ENCODE measurements at regions of chr6 and their contacts with region 1.

Region 1: DNA sequence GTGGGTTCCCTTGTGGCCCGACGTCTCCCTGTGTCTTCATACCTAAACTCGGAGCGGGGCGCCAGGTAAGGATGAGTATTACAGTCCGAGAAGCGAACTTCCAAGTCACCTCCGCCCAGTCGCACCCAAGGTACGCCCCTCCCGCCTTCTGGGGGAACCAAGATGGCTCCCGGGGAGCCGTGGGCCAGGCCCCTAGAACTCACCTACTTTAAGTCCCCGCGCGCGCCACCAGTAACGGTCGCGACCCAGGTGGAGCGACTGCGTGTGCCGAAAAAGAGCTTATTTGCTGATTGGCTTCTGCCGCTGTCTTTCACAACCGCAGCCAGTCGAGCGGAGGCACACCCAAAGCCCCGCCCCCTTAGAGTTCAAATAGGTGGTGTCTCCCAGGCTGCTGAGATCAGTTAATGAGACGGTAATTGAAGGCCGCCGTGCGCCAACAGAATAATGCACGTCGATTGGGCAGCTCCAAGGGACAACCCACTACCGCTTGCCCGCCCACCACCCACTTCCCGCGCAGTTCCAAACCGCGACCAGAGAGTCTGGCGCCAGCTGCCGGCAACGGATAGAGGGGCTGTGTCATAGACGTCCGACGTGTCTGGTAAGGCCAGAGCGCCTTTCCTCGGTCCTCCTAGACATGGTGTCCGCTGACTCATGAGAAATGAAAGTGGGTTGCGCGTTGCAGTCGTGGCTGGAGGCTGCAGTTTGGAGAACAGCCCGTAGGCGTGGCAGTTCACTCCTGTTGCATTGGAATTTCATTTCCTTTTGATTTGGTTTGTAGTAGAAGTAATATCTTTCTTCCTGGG is at the start of gene MDC1:
- DNase-seq: peak; percentile 100
- ATAC-seq: peak; percentile 83 to 91 (median 87)
- H3K4me3 ChIP-seq: peak within 1 kb of the TSS; percentile 45 to 93 (median 73)
- H3K27ac ChIP-seq: peak within 1 kb of the TSS; percentile 80 to 97 (median 91)
- H3K4me1 ChIP-seq: peaks cover 0 to 40% (median 29%) of the 10 kb centered on the region in 12 donors
- H3K27me3 ChIP-seq: no peaks in the 10 kb centered on the region
- CTCF ChIP-seq: peak in 10 of 12 donors; percentile 4 to 50 (median 36)
- POLR2A ChIP-seq: peak; percentile 25 to 87
- total RNA-seq, gene MDC1: 10.6 to 25.0 (median 17.5) TPM

Region 2: GRCh38 chr6:30489081-30490025 is 227.9 kb before region 1 on chr6 and contains the start of gene HLA-E:
- intact Hi-C with region 1: loop called in 1 of 10 experiments (anchors 10 kb)
- DNase-seq: peak; percentile 91 to 95 (median 93)
- ATAC-seq: peak; percentile 93 to 98 (median 96)
- H3K4me3 ChIP-seq: peak within 1 kb of the TSS; percentile 64 to 99 (median 94)
- H3K27ac ChIP-seq: peak within 1 kb of the TSS; percentile 92 to 100 (median 96)
- H3K4me1 ChIP-seq: peaks cover 0 to 45% (median 19%) of the 10 kb centered on the region in 12 donors
- H3K27me3 ChIP-seq: no peaks in the 10 kb centered on the region
- CTCF ChIP-seq: no peak
- POLR2A ChIP-seq: peak; percentile 71 to 99
- total RNA-seq, gene HLA-E: 96.1 to 560 (median 162) TPM

Region 3: DNA sequence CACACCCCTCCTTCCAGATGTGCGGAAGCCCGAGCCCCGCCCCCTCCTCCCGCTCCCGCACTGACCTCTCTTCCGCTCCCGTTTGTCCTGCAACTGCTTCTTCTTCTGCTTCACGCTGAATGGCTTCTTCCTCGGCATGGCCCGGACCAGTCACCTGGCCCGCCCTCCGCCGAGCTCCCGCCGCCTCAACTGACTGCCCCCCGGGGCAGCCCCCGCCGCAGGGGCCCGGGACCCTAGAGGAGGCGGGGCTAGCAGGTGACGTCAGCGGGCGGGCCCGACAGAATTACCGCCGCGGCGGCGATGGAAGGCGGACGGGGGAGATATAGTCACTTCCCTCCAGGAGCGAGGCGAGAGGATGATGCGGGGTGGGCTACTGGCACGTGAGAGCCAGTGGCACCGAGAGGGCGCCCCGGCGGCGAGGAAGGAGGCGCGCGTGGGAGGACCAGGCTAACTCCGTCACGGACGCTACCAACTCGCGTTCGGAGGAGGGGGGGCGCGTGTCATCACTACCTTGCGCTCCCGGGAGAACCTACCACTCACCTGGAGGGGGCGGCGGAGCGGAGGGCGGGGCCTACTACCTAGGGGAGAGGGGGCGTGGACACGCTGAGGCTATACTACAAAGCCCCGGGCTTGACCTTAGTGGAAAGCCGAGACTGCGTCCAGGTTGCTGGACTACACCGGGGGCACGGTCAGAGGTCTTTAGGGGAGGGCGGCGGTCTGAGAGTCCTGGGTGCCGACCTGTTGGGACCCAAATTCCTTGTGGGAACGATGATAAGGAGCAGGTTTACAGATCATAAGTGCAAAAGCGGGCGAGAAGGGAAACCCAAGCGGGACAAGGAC is 161.0 kb before region 1 on chr6 and contains the start of gene GNL1:
- intact Hi-C with region 1: loop called in 2 of 10 experiments (anchors 5 to 10 kb)
- DNase-seq: peak; percentile 93 to 96 (median 93)
- ATAC-seq: peak; percentile 78 to 87 (median 82)
- H3K4me3 ChIP-seq: peak within 1 kb of the TSS; percentile 73 to 99 (median 90)
- H3K27ac ChIP-seq: peak within 1 kb of the TSS; percentile 95 to 99 (median 98)
- H3K4me1 ChIP-seq: peaks cover 0 to 30% (median 17%) of the 10 kb centered on the region in 12 donors
- H3K27me3 ChIP-seq: no peaks in the 10 kb centered on the region
- CTCF ChIP-seq: peak in 1 of 12 donors; percentile 3
- POLR2A ChIP-seq: peak in 1 of 2 donors; percentile 42
- total RNA-seq, gene GNL1: 9.1 to 32.4 (median 17.4) TPM

Region 4: DNA sequence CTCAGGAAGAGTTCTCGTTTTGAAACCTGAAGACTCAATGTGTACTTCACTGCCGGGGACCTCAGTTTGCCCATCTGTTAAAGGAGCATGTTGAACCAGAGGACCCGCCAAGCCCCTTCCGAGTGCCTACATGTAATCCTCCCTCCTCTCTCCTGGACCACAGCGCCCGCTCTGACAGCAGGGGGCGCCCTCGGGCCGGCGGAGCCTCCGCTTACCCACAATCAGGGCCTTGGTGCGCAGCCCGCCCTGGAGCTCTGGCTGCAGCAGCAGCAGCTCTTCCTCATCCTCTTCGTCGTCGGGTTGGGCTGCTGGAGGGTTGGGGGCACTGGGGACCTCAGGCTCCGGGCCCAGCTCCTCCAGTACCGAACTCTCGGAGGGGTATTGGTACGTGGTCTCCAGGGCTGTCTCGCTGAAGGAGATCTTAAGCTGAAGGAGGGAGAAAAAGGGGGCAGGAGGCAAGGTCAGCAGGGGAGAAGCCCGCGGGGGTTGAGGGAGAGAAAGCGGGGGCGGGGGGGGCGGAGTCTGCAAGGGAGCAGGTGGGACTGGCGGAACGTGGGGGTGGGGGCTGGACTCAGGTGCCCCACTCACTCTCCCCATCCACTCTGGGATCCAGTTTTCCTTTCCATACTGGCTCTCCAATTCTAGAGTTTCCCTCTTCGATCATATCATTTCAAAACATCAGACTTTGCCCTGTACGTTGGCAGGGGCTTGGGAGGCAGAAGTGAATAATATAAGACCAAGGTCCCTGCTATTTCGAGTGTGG is 38.1 kb before region 1 on chr6:
- intact Hi-C with region 1: loop called (anchors 1 to 2 kb)
- DNase-seq: peak; percentile 87 to 95 (median 89)
- ATAC-seq: peak; percentile 68 to 77 (median 73)
- H3K4me3 ChIP-seq: peak overlapping the region in 7 of 12 donors; percentile 0 to 94 (median 18)
- H3K27ac ChIP-seq: peak overlapping the region in 5 of 12 donors; percentile 29 to 100 (median 56)
- H3K4me1 ChIP-seq: peaks cover 0 to 55% (median 44%) of the 10 kb centered on the region in 12 donors
- H3K27me3 ChIP-seq: no peaks in the 10 kb centered on the region
- CTCF ChIP-seq: peak; percentile 92 to 98 (median 96)
- POLR2A ChIP-seq: no peak

Region 5: DNA sequence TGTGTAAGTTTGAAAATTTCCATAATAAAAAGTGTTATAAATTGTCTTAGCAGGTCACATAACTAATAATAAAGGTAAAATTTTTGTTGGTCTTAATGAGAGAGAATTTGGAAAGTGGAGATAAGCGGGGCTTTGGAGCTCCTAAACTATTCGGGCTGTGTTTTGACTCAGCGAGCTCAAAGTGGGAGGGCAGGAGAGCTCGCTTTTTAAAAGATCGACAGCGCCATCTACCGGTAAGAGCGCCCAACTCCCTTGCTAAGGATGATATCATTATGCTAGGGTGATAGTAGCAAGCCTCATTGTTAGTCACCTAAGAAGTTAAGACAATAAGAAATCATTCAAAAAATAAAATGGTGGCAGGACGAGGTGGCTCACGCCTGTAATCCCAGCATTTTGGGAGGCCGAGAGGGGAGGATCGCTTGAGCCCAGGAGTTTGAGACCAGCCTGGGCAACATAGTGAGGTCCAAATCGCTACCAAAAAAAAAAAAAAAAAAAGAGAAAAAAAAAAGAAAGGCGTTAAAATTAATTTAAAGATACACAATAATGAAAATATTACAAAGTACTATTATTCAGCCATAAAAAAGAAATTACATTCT is 370.3 kb after region 1 on chr6:
- intact Hi-C with region 1: loop called in 1 of 10 experiments (anchors 10 kb)
- DNase-seq: peak; percentile 80 to 89 (median 86)
- ATAC-seq: peak; percentile 75 to 95 (median 94)
- H3K4me3 ChIP-seq: no peak overlapping the region
- H3K27ac ChIP-seq: no peak overlapping the region
- H3K4me1 ChIP-seq: peaks cover 0 to 15% (median 5%) of the 10 kb centered on the region in 12 donors
- H3K27me3 ChIP-seq: peaks cover 0 to 6% (median 0%) of the 10 kb centered on the region in 9 donors
- CTCF ChIP-seq: peak; percentile 46 to 86 (median 80)
- POLR2A ChIP-seq: no peak